Activated T-helper 1 cell treated with anti-CD3 and anti-CD28 coated beads, Interleukin-12 subunit alpha, Interleukin-12 subunit beta, Interleukin-2, Interleukin-4 antibody, amounts not matched to agents 30 ng/mL and 10 ng/mL and 1 ng/mL, durations not matched to agents 14 hours and 24 hours and 36 hours (primary cell): ENCODE measurements at regions of chr6 and their contacts with region 1.

Region 1: DNA sequence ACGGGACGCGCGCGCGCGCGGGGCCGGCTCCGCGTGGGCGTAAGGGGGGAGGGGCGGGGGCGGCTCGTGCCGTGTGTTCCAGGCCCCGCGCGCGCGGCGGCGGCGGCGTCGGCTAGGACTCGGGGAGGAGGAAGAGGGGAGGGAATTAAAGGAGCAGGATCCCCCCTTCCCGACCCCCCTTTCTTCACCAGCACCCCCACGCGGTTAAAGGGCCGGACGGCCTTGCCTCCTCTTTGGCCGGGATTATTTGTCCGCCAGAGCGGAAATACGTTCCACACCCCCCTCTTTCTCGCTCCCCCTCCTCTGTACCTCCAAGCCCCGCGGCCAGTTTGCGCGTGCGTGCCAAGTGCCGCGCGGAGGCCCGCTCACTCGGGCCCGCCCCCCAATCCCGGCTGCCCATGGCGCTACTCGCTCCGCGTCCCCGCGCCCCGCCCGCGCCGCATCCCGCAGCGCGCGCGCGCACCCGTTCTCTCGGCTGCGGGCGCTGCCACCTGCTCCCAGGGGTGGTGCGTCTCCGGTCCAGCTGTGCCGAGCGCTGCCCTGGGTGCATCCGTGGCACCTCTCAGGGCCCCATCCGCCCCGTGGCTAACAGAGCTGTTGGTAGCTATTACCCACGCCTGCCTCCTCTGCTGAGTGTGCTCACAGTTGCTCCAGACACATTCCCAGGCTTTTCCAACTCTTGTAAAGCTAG is at the start of gene ZBTB12:
- DNase-seq: peak; percentile 82
- H3K4me3 Mint-ChIP-seq: peak within 1 kb of the TSS; percentile 81
- H3K27ac Mint-ChIP-seq: peak within 1 kb of the TSS; percentile 88
- H3K4me1 Mint-ChIP-seq: peaks cover 37% of the 10 kb centered on the region
- H3K27me3 Mint-ChIP-seq: no peaks in the 10 kb centered on the region
- total RNA-seq, gene ZBTB12: 4.6 and 5.1 TPM in 2 replicates

Region 2: GRCh38 chr6:31729515-31729978 is 172.6 kb before region 1 on chr6:
- intact Hi-C with region 1: loop called (anchors 2 kb)
- DNase-seq: peak; percentile 68
- H3K4me3 Mint-ChIP-seq: peak overlapping the region; percentile 95
- H3K27ac Mint-ChIP-seq: peak overlapping the region; percentile 74
- H3K4me1 Mint-ChIP-seq: peaks cover 54% of the 10 kb centered on the region
- H3K27me3 Mint-ChIP-seq: no peaks in the 10 kb centered on the region

Region 3: GRCh38 chr6:31834434-31835198 is 67.5 kb before region 1 on chr6:
- intact Hi-C with region 1: loop called (anchors 1 kb)
- DNase-seq: peak; percentile 72
- H3K4me3 Mint-ChIP-seq: peak overlapping the region; percentile 94
- H3K27ac Mint-ChIP-seq: peak overlapping the region; percentile 100
- H3K4me1 Mint-ChIP-seq: peaks cover 49% of the 10 kb centered on the region
- H3K27me3 Mint-ChIP-seq: no peaks in the 10 kb centered on the region

Region 4: GRCh38 chr6:31862344-31863227 is 39.5 kb before region 1 on chr6 and contains the start of gene NEU1:
- intact Hi-C with region 1: loop called (anchors 1 kb)
- DNase-seq: peak; percentile 99
- H3K4me3 Mint-ChIP-seq: peak within 1 kb of the TSS; percentile 97
- H3K27ac Mint-ChIP-seq: peak within 1 kb of the TSS; percentile 94
- H3K4me1 Mint-ChIP-seq: peaks cover 37% of the 10 kb centered on the region
- H3K27me3 Mint-ChIP-seq: peaks cover 3% of the 10 kb centered on the region
- total RNA-seq, gene NEU1: 22.1 and 24.3 TPM in 2 replicates

Region 5: DNA sequence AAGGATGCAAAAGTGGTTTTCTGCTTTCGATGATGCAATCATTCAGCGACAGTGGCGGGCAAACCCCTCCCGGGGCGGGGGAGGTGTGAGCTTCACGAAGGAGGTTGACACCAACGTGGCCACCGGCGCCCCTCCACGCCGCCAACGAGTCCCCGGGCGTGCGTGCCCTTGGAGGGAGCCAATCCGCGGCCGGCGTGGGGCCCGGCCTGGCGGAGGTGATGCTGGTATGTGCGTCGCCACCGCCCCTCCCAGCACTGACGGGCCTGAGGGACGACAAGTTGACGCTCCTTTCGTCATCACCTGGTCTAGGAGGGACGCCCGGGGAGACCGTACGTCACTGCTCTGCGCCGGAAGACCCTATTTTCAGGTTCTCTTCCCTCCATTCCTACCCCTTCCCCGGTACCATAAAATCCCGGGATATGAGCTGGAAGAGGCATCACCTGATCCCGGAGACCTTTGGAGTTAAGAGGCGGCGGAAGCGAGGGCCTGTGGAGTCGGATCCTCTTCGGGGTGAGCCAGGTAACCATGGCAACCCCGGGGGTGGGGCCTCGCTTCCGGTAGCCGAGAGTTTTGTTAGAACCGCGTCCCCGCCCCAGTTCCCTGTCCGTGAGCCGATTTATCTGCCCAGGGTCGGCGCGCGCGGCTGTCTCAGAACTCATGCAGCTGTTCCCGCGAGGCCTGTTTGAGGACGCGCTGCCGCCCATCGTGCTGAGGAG is 70.1 kb after region 1 on chr6 and contains the start of gene DXO:
- intact Hi-C with region 1: loop called (anchors 2 kb)
- DNase-seq: peak; percentile 97
- H3K4me3 Mint-ChIP-seq: peak within 1 kb of the TSS; percentile 80
- H3K27ac Mint-ChIP-seq: peak within 1 kb of the TSS; percentile 100
- H3K4me1 Mint-ChIP-seq: peaks cover 34% of the 10 kb centered on the region
- H3K27me3 Mint-ChIP-seq: no peaks in the 10 kb centered on the region
- total RNA-seq, gene DXO: 14.1 and 15.2 TPM in 2 replicates

Region 6: DNA sequence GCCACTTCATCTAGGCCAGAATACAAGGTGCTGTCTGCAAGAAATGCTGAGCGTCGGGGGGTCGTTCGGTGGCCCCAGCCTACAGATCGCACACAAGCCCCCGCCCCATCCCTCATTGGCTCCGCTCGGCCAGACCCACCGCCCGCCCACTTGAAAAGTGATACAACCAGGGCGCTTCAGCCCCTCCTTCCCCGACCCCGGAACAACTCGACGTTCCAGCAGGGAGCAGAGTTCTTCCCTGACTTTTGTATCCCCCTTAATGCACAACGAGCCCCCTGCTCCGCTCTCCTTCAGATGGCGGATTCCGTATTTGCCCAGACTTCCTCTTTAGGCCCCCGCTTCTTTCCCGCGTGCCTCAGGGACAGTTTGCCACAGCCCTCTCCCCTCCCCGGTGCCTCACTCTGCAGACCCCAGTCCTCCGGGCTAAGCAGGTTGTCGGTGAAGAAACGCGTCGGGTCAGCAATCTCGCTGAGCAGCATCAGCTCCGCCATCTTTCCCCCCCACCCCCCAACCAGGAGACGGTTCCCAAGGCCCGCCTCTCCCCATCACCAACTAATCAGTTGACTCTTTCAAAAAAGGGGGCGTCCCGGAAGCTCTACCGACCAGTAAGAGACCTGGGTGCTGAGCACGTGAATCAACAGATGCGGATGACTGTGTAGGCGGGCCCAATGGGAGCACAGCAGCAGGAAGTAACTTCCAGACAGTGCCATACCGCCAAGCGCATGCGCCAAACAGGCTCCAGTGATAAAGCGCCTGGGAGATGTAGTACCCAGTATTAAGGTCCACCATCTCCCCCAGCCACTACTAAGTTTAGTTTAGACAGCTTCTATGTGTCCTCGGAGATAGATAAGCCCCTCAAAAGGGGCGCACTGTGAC is 225.9 kb after region 1 on chr6 and contains the start of gene ATF6B:
- intact Hi-C with region 1: loop called (anchors 2 kb)
- DNase-seq: peak; percentile 95
- H3K4me3 Mint-ChIP-seq: peak within 1 kb of the TSS; percentile 99
- H3K27ac Mint-ChIP-seq: peak within 1 kb of the TSS; percentile 94
- H3K4me1 Mint-ChIP-seq: peaks cover 45% of the 10 kb centered on the region
- H3K27me3 Mint-ChIP-seq: peaks cover 2% of the 10 kb centered on the region
- total RNA-seq, gene ATF6B: 80.1 and 97.6 TPM in 2 replicates

Region 7: GRCh38 chr6:32190054-32190851 is 288.2 kb after region 1 on chr6 and contains the start of gene PBX2:
- intact Hi-C with region 1: loop called (anchors 5 kb)
- DNase-seq: peak; percentile 75
- H3K4me3 Mint-ChIP-seq: peak within 1 kb of the TSS; percentile 97
- H3K27ac Mint-ChIP-seq: peak within 1 kb of the TSS; percentile 97
- H3K4me1 Mint-ChIP-seq: peaks cover 72% of the 10 kb centered on the region
- H3K27me3 Mint-ChIP-seq: no peaks in the 10 kb centered on the region
- total RNA-seq, gene PBX2: 91.9 and 94.0 TPM in 2 replicates